Activated T-helper 1 cell treated with anti-CD3 and anti-CD28 coated beads, Interleukin-12 subunit alpha, Interleukin-12 subunit beta, Interleukin-2, Interleukin-4 antibody, amounts not matched to agents 30 ng/mL and 10 ng/mL and 1 ng/mL, durations not matched to agents 14 hours and 24 hours and 36 hours (primary cell): ENCODE measurements at regions of chr1 and their contacts with region 1.

Region 1: DNA sequence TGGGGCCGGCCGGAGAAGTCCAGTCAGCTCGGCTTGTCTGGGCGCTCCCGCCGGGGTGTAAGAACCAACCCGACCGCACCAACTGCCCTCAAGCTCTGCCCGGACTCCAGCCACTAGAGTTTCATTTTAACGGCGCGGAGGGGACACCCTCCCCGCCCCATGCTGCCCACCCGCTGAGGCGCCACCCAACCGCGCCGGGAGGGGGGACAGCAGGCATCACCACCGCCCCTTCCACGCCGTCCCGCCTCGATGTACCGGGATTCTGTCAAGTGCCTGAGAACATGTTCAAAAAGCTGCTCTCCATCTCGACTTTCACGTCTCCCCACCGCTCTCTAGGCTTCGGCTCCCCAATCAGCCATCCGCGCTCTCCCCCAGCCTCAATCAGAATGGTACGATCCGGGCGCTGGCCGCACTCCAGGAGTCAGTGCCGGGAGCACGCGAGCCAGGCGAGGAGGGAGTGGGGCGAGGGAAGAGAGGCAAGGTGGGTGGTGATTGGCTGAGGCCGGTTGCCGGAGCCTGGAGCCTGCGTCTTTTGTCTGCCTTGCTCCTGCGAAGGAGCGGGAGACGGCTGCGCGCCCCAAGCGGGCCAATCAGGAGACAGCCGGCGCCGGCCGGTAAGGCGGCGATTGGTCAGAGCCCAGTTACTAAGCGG is at the start of gene PIK3R3:
- DNase-seq: peak; percentile 89
- H3K4me3 Mint-ChIP-seq: peak within 1 kb of the TSS; percentile 96
- H3K27ac Mint-ChIP-seq: peak within 1 kb of the TSS; percentile 98
- H3K4me1 Mint-ChIP-seq: peaks cover 42% of the 10 kb centered on the region
- H3K27me3 Mint-ChIP-seq: peaks cover 64% of the 10 kb centered on the region
- total RNA-seq, gene PIK3R3: 3.6 TPM in 2 replicates

Region 2: DNA sequence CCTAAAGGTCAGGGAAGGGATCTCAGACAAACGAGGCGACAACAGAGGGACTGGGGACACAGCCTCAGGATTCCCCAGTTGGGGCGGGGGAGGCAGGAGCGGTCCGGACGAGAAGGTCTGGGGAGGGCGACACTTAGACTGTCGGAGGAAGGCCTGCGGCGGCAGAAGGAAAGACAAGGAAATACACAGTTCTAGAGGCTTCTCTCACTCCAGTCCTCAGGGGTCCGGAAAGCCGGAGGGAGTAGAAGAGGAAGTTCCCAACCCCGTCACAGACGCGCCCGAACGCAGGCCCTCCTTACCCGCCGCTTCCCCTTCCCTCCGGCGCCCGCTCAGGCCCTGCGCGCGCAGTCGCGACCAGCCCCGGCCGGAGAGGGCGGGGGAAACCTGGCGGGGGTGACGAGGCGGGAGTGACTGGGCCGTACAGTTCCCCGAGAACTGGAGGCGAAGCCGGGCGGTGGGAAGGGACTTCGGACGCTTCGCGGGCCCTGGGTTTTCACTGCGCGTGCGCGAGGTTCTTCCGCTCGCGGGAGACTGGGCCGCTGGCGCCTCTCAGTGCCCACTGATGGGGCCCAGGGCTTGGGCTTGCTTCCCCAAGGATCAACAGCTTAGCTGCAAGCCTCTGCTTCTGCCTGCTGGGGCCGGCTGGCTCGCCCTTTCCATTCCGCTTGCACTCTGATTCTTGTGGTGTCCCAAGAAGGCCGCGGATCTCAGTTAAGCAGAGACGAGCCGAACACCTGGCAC is 382.2 kb before region 1 on chr1 and contains the start of gene IPP:
- intact Hi-C with region 1: loop called (anchors 5 kb)
- DNase-seq: peak; percentile 96
- H3K4me3 Mint-ChIP-seq: peak within 1 kb of the TSS; percentile 98
- H3K27ac Mint-ChIP-seq: peak within 1 kb of the TSS; percentile 96
- H3K4me1 Mint-ChIP-seq: peaks cover 10% of the 10 kb centered on the region
- H3K27me3 Mint-ChIP-seq: no peaks in the 10 kb centered on the region
- total RNA-seq, gene IPP: 12.3 and 13.9 TPM in 2 replicates

Region 3: DNA sequence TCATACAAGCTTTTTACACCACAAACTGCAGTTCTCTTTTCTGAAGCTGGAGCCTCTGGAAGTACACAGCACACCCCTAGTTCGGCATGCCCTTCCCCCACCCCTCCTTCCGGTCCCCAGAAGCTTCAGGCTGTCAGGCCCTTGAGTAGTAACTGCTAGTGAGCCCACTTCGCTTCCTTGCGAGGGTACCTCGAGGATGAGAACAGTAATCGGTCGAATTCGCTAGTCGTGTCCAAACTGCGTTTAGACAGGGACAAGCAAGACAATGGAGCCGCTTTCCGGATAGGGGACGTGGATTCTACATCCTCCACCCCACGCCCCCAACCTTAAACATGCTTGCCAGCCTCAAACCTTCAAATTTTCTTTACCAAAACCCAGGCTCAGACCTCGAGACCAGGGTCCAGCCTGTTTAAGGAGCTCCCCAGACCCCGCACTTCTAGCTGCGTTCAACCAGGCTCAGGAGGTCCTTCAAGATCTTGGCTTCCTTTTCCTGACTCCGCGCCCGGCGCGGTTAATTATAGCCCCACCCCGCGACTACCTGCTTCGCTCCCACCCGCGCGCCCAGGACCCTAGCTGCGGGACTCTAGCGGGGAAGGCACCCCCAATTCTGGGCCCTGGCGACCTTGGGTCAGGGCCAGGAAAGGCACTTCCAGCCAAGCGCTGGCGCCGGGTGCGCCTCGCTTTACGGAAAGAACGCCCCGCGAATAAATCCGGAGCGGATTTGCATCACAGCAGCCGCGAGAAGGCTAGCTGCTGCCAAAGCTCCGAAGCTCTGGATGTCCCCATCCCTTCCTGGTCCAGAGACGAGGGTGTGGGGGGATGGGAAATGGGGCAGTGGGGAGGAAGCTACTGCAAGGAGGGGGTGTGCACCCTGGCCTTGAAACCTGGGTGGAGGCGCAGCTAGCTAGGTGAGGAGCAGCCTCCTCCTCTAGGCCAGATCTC is 34.1 kb after region 1 on chr1:
- intact Hi-C with region 1: loop called (anchors 2 kb)
- DNase-seq: peak; percentile 22
- H3K4me3 Mint-ChIP-seq: peak overlapping the region; percentile 81
- H3K27ac Mint-ChIP-seq: peak overlapping the region; percentile 82
- H3K4me1 Mint-ChIP-seq: peaks cover 18% of the 10 kb centered on the region
- H3K27me3 Mint-ChIP-seq: peaks cover 14% of the 10 kb centered on the region

Region 4: GRCh38 chr1:46197964-46198811 is 65.5 kb after region 1 on chr1 and contains the start of gene POMGNT1:
- intact Hi-C with region 1: loop called (anchors 1 kb)
- DNase-seq: peak; percentile 78
- H3K4me3 Mint-ChIP-seq: peak within 1 kb of the TSS; percentile 87
- H3K27ac Mint-ChIP-seq: peak within 1 kb of the TSS; percentile 71
- H3K4me1 Mint-ChIP-seq: peaks cover 27% of the 10 kb centered on the region
- H3K27me3 Mint-ChIP-seq: no peaks in the 10 kb centered on the region
- total RNA-seq, gene POMGNT1: 80.8 and 85.7 TPM in 2 replicates

Region 5: GRCh38 chr1:46340404-46341221 is 208.0 kb after region 1 on chr1 and contains the start of gene NSUN4:
- intact Hi-C with region 1: loop called (anchors 5 kb)
- DNase-seq: peak; percentile 83
- H3K4me3 Mint-ChIP-seq: peak within 1 kb of the TSS; percentile 100
- H3K27ac Mint-ChIP-seq: peak within 1 kb of the TSS; percentile 100
- H3K4me1 Mint-ChIP-seq: peaks cover 39% of the 10 kb centered on the region
- H3K27me3 Mint-ChIP-seq: no peaks in the 10 kb centered on the region
- total RNA-seq, gene NSUN4: 37.6 and 39.6 TPM in 2 replicates